GM12878 (cell line): ENCODE measurements at regions of chr22 and their contacts with region 1.

Region 1: DNA sequence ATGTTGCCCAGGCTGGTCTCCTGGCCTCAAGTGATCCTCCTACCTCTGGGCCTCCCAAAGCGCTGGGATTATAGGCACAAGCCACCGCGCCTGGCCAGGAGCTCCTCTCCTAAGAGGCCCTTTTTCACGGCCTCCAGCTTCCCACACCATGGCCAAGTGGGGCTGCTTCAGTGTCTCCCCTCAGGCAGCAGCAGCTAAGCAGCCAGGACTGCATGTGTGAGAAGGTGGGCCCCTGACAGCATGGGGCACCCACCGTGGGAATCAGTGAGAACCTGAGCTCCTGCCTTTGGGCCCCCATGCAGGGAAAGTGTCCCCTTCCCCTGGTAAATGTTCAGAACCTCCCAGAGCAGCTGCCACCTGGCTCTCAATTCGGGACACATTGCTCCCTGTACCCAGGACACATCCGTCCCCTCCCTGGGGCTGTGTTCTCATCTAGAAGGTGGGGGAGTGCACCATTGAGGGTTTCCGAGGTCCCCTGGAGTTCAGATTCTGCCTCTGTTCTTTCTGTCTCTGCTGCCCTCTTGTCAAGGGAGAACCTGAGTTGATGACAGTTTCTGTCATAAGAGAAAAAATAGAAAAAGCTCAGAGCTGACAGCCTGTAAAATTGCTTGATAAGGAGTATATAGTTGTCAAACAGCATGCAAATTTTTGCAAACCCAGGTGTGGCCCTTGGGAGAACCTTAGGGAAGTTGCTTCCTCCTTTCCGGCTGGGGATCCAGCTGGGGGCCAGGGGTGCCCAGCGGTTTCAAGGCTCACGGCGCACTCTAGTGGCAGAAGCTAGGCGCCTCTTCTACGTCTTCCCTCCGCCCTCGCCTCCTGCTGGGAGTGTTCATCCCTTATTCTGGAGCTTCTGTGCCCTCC is 29.7 kb downstream of the FAM83F start:
- DNase-seq: no peak
- ATAC-seq: peak; percentile 92
- H3K4me3 ChIP-seq: no peak overlapping the region
- H3K27ac ChIP-seq: no peak overlapping the region
- H3K4me1 ChIP-seq: no peaks in the 10 kb centered on the region
- H3K27me3 ChIP-seq: peaks cover 0 to 1% of the 10 kb centered on the region in 2 experiments; a peak in 2 of 4 replicates
- CTCF ChIP-seq: peak; percentile 90 to 97 (median 92); a peak in 5 of 6 replicates
- EP300 ChIP-seq: no peak; a peak in 1 of 4 replicates
- POLR2A ChIP-seq: no peak
- RAD21 ChIP-seq: peak; percentile 95

Region 2: DNA sequence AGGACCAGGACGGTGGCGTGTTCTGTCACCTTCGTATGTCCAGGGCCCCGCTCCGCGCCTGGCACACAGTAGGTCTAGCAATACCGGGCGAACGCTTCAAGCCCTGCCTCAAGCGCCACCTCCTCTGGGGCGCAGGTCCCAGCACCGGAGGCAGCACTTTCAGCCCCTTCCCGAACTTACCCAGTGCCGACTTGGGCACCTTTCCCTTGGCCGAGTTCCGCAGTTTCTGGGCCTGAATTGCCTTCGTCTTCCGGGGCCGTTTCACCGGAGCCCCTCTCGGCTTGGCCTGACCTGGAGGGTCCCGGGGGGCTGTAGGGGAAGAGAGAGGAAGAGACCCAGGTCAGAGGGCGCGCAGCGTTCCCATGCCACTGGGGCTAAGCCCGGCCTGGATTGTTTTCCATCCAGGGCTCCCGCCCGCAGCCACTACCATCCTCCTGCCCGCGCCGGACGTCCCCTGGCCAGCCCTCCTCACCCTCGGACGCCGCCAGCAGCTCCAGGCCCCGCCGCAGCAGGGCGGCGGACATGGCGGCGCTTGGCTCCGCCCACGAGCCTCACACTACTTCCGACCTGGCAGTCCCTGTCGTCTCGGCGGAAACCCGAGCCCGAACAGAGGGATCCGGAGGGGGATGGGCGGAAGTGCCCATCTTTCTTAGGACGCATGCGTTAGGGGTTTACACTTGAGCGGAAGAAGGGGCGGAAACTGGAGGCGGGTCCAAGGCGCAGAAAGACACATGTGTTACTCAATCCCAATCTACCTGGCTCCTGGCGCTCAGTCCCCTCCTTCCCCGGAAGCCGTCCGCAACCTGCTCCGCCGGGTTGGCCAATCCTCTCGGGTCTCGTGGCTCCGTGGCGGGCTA is 492.0 kb before region 1 on chr22 and contains the start of gene RPS19BP1:
- CTCF ChIA-PET with region 1: interaction called, 157 read pairs
- POLR2A ChIA-PET with region 1: interaction called, 3 read pairs
- RAD21 ChIA-PET with region 1: interaction called, 48 read pairs
- SMC1A ChIA-PET with region 1: interaction called, 31 read pairs
- in situ Hi-C with region 1: no loop called
- intact Hi-C with region 1: loop called (anchors 5 kb)
- DNase-seq: peak; percentile 100
- ATAC-seq: peak; percentile 80
- H3K4me3 ChIP-seq: peak within 1 kb of the TSS; percentile 99
- H3K27ac ChIP-seq: peak within 1 kb of the TSS; percentile 96
- H3K4me1 ChIP-seq: peaks cover 34% of the 10 kb centered on the region
- H3K27me3 ChIP-seq: no peaks in the 10 kb centered on the region
- CTCF ChIP-seq: no peak
- EP300 ChIP-seq: no peak
- POLR2A ChIP-seq: peak; percentile 99
- RAD21 ChIP-seq: no peak
- polyA plus RNA-seq, gene RPS19BP1: 2.7 to 14.3 TPM

Region 3: GRCh38 chr22:39559454-39560105 is 464.9 kb before region 1 on chr22:
- CTCF ChIA-PET with region 1: interaction called, 23 read pairs
- POLR2A ChIA-PET with region 1: interaction called, 3 read pairs
- RAD21 ChIA-PET with region 1: interaction called, 9 read pairs
- SMC1A ChIA-PET with region 1: interaction called, 11 read pairs
- in situ Hi-C with region 1: no loop called
- intact Hi-C with region 1: loop called (anchors 5 kb)
- DNase-seq: no peak
- ATAC-seq: peak; percentile 72
- H3K4me3 ChIP-seq: no peak overlapping the region
- H3K27ac ChIP-seq: no peak overlapping the region
- H3K4me1 ChIP-seq: no peaks in the 10 kb centered on the region
- H3K27me3 ChIP-seq: peaks cover 7 to 8% of the 10 kb centered on the region in 2 experiments; a peak in 3 of 4 replicates
- CTCF ChIP-seq: peak; percentile 33 to 58 (median 40); a peak in 5 of 6 replicates
- EP300 ChIP-seq: no peak
- POLR2A ChIP-seq: no peak
- RAD21 ChIP-seq: peak; percentile 32; the same call in 1 of the 2 replicates

Region 4: GRCh38 chr22:39917776-39918495 is 106.5 kb before region 1 on chr22:
- CTCF ChIA-PET with region 1: interaction called, 13 read pairs
- POLR2A ChIA-PET with region 1: no interaction called
- RAD21 ChIA-PET with region 1: interaction called, 5 read pairs
- SMC1A ChIA-PET with region 1: interaction called, 3 read pairs
- in situ Hi-C with region 1: no loop called
- intact Hi-C with region 1: no loop called
- DNase-seq: no peak
- ATAC-seq: no peak
- H3K4me3 ChIP-seq: no peak overlapping the region
- H3K27ac ChIP-seq: no peak overlapping the region
- H3K4me1 ChIP-seq: peaks cover 9% of the 10 kb centered on the region; the same call in 1 of the 2 replicates
- H3K27me3 ChIP-seq: no peaks in the 10 kb centered on the region
- CTCF ChIP-seq: no peak
- EP300 ChIP-seq: no peak
- POLR2A ChIP-seq: no peak
- RAD21 ChIP-seq: no peak

Region 5: GRCh38 chr22:39946503-39947219 is 77.8 kb before region 1 on chr22:
- CTCF ChIA-PET with region 1: interaction called, 10 read pairs
- POLR2A ChIA-PET with region 1: no interaction called
- RAD21 ChIA-PET with region 1: interaction called, 6 read pairs
- SMC1A ChIA-PET with region 1: interaction called, 13 read pairs
- in situ Hi-C with region 1: no loop called
- intact Hi-C with region 1: no loop called
- DNase-seq: no peak
- ATAC-seq: peak; percentile 54
- H3K4me3 ChIP-seq: no peak overlapping the region
- H3K27ac ChIP-seq: no peak overlapping the region
- H3K4me1 ChIP-seq: peaks cover 46% of the 10 kb centered on the region
- H3K27me3 ChIP-seq: no peaks in the 10 kb centered on the region
- CTCF ChIP-seq: no peak
- EP300 ChIP-seq: no peak
- POLR2A ChIP-seq: no peak
- RAD21 ChIP-seq: no peak

Region 6: GRCh38 chr22:39999144-39999757 is 25.2 kb before region 1 on chr22:
- CTCF ChIA-PET with region 1: interaction called, 16 read pairs
- POLR2A ChIA-PET with region 1: no interaction called
- RAD21 ChIA-PET with region 1: interaction called, 3 read pairs
- SMC1A ChIA-PET with region 1: interaction called, 8 read pairs
- in situ Hi-C with region 1: no loop called
- intact Hi-C with region 1: no loop called
- DNase-seq: no peak
- ATAC-seq: no peak
- H3K4me3 ChIP-seq: no peak overlapping the region
- H3K27ac ChIP-seq: no peak overlapping the region
- H3K4me1 ChIP-seq: no peaks in the 10 kb centered on the region
- H3K27me3 ChIP-seq: peaks cover 3 to 11% of the 10 kb centered on the region in 2 experiments
- CTCF ChIP-seq: peak in 2 of 3 experiments; percentile 16 to 27; a peak in 3 of 6 replicates
- EP300 ChIP-seq: no peak
- POLR2A ChIP-seq: no peak
- RAD21 ChIP-seq: peak; percentile 44

Region 7: GRCh38 chr22:40044102-40044869 is 19.9 kb after region 1 on chr22:
- CTCF ChIA-PET with region 1: interaction called, 14 read pairs
- POLR2A ChIA-PET with region 1: no interaction called
- RAD21 ChIA-PET with region 1: interaction called, 16 read pairs
- SMC1A ChIA-PET with region 1: interaction called, 7 read pairs
- in situ Hi-C with region 1: no loop called
- intact Hi-C with region 1: no loop called
- DNase-seq: peak; percentile 99
- ATAC-seq: peak; percentile 97
- H3K4me3 ChIP-seq: peak overlapping the region; percentile 72
- H3K27ac ChIP-seq: peak overlapping the region; percentile 81
- H3K4me1 ChIP-seq: peaks cover 9% of the 10 kb centered on the region
- H3K27me3 ChIP-seq: 0 out of 4 replicates have a peak, but pooled peaks cover 0 to 1% of the 10 kb centered on the region in 2 experiments
- CTCF ChIP-seq: no peak
- EP300 ChIP-seq: no peak
- POLR2A ChIP-seq: peak; percentile 94
- RAD21 ChIP-seq: no peak

Region 8: DNA sequence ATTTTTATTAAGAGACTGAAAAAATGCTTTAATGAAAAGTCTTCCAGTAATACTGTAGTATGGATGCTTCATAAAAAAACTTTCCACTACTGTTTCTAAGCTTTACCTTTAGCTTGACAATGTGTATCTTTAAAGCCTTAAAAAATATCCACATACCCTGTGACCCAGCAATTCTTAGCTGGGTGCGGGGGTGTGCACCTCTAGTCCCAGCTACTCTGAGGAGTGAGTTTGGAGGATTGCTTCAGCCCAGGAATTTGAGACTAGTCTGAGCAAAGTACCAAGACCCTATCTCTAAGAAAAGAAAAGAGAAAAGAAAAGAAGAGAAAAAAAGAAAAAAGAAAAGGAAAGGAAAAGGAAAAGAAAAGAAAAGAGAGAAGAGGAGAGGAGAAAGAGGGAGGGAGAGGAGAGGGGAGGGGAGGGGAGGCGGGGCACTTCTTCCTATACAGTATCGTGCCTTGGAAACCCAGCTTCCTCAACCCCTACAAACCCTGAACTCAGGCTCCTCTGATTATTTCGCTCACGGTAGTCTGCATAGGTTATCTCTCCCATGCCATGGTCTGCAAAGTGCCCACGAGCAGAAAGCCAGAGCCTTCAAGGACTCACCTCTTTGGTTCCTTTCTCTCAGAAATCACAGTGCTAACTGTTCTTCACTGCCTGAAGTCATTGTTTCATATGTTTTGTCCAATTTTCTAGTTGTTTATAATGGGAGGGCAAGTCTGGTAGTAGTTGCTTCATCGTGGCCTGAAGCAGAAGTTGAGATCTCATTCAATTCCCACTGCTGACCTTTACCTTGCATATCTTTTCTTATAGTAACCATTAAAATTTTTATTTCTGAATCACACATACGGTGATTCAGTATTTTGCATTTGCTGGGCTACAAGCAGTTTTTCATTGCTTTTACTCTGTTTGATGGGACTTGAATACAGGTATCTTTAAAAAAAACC is 52.5 kb after region 1 on chr22:
- CTCF ChIA-PET with region 1: no interaction called
- POLR2A ChIA-PET with region 1: no interaction called
- RAD21 ChIA-PET with region 1: no interaction called
- SMC1A ChIA-PET with region 1: no interaction called
- in situ Hi-C with region 1: no loop called
- intact Hi-C with region 1: no loop called
- DNase-seq: no peak
- ATAC-seq: no peak
- H3K4me3 ChIP-seq: no peak overlapping the region
- H3K27ac ChIP-seq: no peak overlapping the region
- H3K4me1 ChIP-seq: no peaks in the 10 kb centered on the region
- H3K27me3 ChIP-seq: no peaks in the 10 kb centered on the region
- CTCF ChIP-seq: no peak
- EP300 ChIP-seq: no peak
- POLR2A ChIP-seq: no peak
- RAD21 ChIP-seq: no peak